ENCODE measurements at regions of chr1 and their contacts with region 1.

Region 1: GRCh38 chr1:27192039-27192529 is 37.2 kb upstream of the SLC9A1 start:
- DNase-seq: no peak
- H3K4me3 ChIP-seq: no peak overlapping the region
- H3K27ac ChIP-seq: no peak overlapping the region
- H3K4me1 ChIP-seq: no peaks in the 10 kb centered on the region
- H3K27me3 ChIP-seq: no peaks in the 10 kb centered on the region
- CTCF ChIP-seq: no peak
- EP300 ChIP-seq: no peak
- POLR2A ChIP-seq: no peak
- RAD21 ChIP-seq: no peak

Region 2: DNA sequence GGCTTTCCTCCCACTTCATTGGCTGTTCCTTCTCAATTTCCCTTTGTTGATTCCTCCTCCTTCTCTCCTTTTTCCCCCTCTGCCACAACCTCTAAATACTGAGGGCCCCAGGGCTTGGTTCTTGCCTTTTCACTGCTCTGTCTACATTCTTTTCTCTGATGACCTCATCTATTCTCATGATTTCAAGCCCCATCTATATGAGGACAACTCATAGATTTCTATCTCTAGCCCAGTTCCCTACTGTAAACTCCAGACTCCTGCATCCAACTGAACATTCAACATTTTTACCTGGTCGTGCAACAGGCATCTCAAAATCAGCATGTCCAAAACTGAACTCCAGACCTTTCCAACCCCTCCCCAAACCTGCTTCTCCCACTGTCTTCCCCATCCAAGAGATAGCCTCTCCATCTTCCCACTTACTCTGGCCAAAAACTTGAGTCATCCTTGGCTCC is 25.7 kb before region 1 on chr1:
- CTCF ChIA-PET with region 1: interaction called, 13 read pairs
- POLR2A ChIA-PET with region 1: no interaction called
- DNase-seq: no peak
- H3K4me3 ChIP-seq: no peak overlapping the region
- H3K27ac ChIP-seq: no peak overlapping the region
- H3K4me1 ChIP-seq: no peaks in the 10 kb centered on the region
- H3K27me3 ChIP-seq: no peaks in the 10 kb centered on the region
- CTCF ChIP-seq: no peak
- EP300 ChIP-seq: no peak
- POLR2A ChIP-seq: no peak
- RAD21 ChIP-seq: no peak

Region 3: GRCh38 chr1:27203946-27204345 is 11.9 kb after region 1 on chr1:
- CTCF ChIA-PET with region 1: interaction called, 14 read pairs
- POLR2A ChIA-PET with region 1: no interaction called
- DNase-seq: no peak
- H3K4me3 ChIP-seq: no peak overlapping the region
- H3K27ac ChIP-seq: no peak overlapping the region
- H3K4me1 ChIP-seq: no peaks in the 10 kb centered on the region
- H3K27me3 ChIP-seq: no peaks in the 10 kb centered on the region
- CTCF ChIP-seq: no peak
- EP300 ChIP-seq: no peak
- POLR2A ChIP-seq: no peak
- RAD21 ChIP-seq: no peak

Region 4: DNA sequence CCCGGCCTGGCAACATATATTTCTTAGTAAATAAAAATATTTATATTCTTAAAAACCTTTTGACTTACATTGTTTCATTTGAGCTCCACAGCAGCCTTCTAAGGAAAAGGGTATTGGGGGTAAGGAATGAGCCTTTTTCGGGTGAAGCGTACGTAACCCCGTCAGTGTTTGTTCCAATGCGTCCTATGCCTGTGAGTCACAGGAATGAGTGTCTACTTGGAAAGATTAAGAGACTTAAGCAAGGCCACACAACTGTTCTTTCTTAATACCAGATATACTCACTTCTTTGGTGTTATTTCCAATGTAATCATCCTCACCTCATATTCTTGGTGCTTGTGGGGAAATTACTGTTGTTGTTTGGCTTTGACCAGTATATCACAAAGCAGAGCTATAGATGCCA is 65.1 kb after region 1 on chr1:
- CTCF ChIA-PET with region 1: interaction called, 14 read pairs
- POLR2A ChIA-PET with region 1: interaction called, 3 read pairs
- DNase-seq: no peak
- H3K4me3 ChIP-seq: no peak overlapping the region
- H3K27ac ChIP-seq: no peak overlapping the region
- H3K4me1 ChIP-seq: no peaks in the 10 kb centered on the region
- H3K27me3 ChIP-seq: no peaks in the 10 kb centered on the region
- CTCF ChIP-seq: no peak
- EP300 ChIP-seq: no peak
- POLR2A ChIP-seq: no peak
- RAD21 ChIP-seq: no peak

Region 5: GRCh38 chr1:27284425-27285273 is 92.6 kb after region 1 on chr1:
- CTCF ChIA-PET with region 1: interaction called, 47 read pairs
- POLR2A ChIA-PET with region 1: no interaction called
- DNase-seq: peak in 1 of 2 experiments; percentile 90
- H3K4me3 ChIP-seq: no peak overlapping the region
- H3K27ac ChIP-seq: no peak overlapping the region
- H3K4me1 ChIP-seq: no peaks in the 10 kb centered on the region
- H3K27me3 ChIP-seq: no peaks in the 10 kb centered on the region
- CTCF ChIP-seq: peak; percentile 76 to 81 (median 77)
- EP300 ChIP-seq: no peak
- POLR2A ChIP-seq: no peak
- RAD21 ChIP-seq: peak; percentile 74 to 75

Region 6: DNA sequence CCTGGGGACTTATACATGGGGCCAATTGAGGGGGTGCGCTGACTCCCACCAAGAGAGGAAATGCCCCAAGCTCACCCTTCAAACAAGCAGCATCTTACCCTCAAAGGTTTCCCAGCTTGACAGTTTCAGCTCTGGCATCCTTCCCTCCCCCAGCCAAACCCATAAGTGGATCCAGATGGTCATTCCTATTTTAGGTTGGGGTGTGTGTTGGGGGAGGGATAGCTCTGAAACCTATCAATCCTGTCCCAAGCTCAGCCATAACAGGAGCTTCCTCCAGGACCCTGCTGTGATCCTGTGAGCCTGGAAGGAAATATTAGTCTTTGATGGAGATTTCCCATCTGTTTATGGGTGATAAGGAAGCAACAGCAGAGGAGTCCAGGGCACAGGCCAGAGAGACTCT is 126.5 kb after region 1 on chr1:
- CTCF ChIA-PET with region 1: no interaction called
- POLR2A ChIA-PET with region 1: no interaction called
- DNase-seq: no peak
- H3K4me3 ChIP-seq: no peak overlapping the region
- H3K27ac ChIP-seq: no peak overlapping the region
- H3K4me1 ChIP-seq: 0 out of 7 replicates have a peak, but pooled peaks cover 0 to 8% (median 0%) of the 10 kb centered on the region in 4 experiments
- H3K27me3 ChIP-seq: peaks cover 0 to 3% (median 0%) of the 10 kb centered on the region in 4 experiments; a peak in 1 of 7 replicates
- CTCF ChIP-seq: no peak
- EP300 ChIP-seq: no peak
- POLR2A ChIP-seq: no peak
- RAD21 ChIP-seq: no peak

Region 7: DNA sequence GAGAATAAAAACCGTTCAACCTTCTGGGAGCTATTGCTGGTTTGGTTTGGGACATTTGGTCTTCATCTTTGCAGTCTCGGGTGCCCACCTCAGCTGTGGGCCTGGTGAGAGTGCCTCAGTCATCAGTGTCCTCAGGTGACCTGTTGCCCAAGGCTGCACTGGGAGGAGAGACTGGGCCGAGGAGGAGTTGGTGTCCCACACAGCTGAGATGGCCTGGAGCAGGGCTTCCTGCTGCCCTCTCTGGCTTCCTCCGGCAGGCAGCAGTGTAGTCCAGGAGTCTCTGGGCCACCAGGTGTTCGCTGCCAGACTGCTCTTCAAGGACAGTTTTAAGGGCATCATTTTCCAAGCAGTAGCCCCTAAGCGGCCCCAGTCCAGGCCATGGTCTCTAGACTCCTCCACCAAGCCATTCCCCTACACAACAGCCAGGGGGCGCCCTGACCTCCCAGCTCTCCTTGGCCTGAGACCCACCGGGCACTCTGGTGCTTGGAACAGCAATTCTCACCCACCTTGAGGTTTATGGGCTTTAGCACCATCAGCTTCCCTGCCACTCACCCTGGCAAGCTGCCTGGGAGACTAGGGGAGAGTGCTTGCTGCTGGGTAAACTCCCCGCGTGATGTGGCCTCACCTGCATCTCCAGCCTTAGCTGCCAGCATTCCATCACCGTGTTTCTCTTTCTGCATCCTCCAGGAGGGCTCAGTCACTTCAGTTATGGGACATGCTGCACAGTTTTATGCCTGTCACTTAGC is 140.6 kb after region 1 on chr1:
- CTCF ChIA-PET with region 1: no interaction called
- POLR2A ChIA-PET with region 1: no interaction called
- DNase-seq: peak in 1 of 2 experiments; percentile 86
- H3K4me3 ChIP-seq: no peak overlapping the region
- H3K27ac ChIP-seq: no peak overlapping the region
- H3K4me1 ChIP-seq: no peaks in the 10 kb centered on the region
- H3K27me3 ChIP-seq: no peaks in the 10 kb centered on the region
- CTCF ChIP-seq: peak; percentile 89 to 97 (median 95)
- EP300 ChIP-seq: no peak
- POLR2A ChIP-seq: no peak
- RAD21 ChIP-seq: peak; percentile 64 to 75

Measured in H1 (cell line).